Right ventricle myocardium inferior (tissue), 1 donor: ENCODE measurements at regions of chr2 and their contacts with region 1.

Region 1: GRCh38 chr2:65064728-65065552 is 8.7 kb downstream of the CEP68 start:
- DNase-seq: peak; percentile 81
- ATAC-seq: peak; percentile 84

Region 2: GRCh38 chr2:65024149-65024829 is 40.7 kb before region 1 on chr2:
- intact Hi-C with region 1: no loop called
- DNase-seq: no peak
- ATAC-seq: no peak

Region 3: DNA sequence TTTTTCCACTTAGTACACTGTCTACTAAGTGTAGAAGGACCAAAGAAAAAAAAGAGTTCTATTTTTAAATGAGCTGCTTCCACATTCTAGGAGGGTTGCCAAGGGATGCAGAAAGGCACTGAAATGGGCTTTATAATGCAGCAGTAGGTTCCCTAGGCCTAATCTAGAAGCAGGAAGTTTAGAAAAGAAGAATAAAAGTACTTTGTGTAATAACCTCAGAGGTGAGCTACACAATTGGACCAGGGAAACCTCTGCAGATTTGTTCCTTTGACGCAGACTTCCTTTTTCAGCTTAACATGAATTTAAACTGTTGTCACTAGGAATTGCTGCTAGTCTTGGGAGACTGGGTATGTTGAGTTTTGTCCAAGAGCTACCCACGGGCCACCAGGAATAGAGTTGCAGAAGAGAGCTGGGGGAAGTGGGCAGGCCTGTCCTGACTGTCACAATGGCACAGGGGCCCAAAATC is 99.5 kb after region 1 on chr2:
- intact Hi-C with region 1: loop called (anchors 5 kb)
- DNase-seq: no peak
- ATAC-seq: peak; percentile 65

Region 4: GRCh38 chr2:65186872-65187851 is 122.2 kb after region 1 on chr2:
- intact Hi-C with region 1: loop called (anchors 2 kb)
- DNase-seq: peak; percentile 86
- ATAC-seq: peak; percentile 92

Region 5: DNA sequence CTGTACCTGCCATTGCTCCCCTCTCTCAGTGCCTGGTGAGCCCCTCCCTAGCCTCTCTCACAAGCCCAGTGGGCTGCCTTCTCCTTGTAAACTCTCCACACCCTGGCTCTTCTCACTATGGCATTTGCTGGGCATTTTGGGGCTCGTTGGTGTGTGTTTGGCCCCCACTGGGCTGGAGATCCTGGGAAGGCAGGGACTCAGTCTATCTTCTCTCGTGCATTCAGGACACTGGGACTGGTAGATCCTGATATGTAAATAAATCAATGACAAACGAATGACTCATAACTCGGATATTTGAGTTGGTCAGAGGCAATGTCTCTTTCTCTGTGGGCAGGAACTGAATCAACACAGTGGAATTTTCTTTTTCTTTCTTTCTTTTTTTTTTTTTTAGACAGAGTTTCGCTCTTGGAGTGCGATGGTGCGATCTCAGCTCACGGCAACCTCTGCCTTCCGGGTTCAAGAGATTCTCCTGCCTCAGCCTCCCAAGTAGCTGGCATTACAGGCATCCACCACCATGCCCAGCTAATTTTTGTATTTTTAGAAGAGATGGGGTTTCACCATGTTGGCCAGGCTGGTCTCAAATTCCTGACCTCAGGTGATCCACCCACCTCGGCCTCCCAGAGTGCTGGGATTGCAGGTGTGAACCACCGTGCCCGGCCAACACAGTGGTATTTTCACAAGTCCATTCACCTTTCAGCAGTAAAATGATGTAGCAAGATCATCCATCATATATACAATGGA is 512.1 kb after region 1 on chr2:
- intact Hi-C with region 1: loop called (anchors 5 kb)
- DNase-seq: no peak
- ATAC-seq: no peak